ENCODE measurements at regions of chr20 and their contacts with region 1.

Region 1: GRCh38 chr20:4014031-4014474 is 1.3 kb downstream of the RNF24 start:
- DNase-seq: peak; percentile 64 to 67
- H3K4me3 ChIP-seq: peak overlapping the region; percentile 80
- H3K4me3 Mint-ChIP-seq: peak overlapping the region; percentile 65
- H3K27ac Mint-ChIP-seq: no peak overlapping the region
- H3K4me1 ChIP-seq: peaks cover 37% of the 10 kb centered on the region
- H3K4me1 Mint-ChIP-seq: peaks cover 38% of the 10 kb centered on the region
- H3K27me3 ChIP-seq: no peaks in the 10 kb centered on the region
- H3K27me3 Mint-ChIP-seq: no peaks in the 10 kb centered on the region
- CTCF ChIP-seq: peak; percentile 50 to 79

Region 2: DNA sequence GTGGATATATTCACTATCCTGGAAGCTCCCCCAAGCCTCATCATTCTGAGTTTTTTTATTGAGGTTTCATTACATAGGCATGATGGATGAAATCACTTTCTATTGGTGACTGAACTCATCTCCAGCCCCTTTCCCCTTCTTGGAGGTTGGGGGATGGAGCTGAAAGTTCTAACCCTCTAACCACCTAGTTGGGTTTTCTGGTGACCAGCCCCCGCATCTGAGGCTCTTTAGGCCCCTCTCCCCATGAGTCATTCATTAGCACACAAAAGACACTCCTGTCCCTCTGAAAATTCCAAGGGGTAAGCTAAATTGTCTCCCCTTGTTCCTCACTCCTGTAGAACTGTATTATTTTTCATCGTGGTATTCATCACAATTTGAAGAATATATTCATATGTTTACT is 384.2 kb before region 1 on chr20:
- CTCF ChIA-PET with region 1: no interaction called
- POLR2A ChIA-PET with region 1: no interaction called
- intact Hi-C with region 1: no loop called
- DNase-seq: no peak
- H3K4me3 ChIP-seq: no peak overlapping the region
- H3K4me3 Mint-ChIP-seq: no peak overlapping the region
- H3K27ac Mint-ChIP-seq: no peak overlapping the region
- H3K4me1 ChIP-seq: no peaks in the 10 kb centered on the region
- H3K4me1 Mint-ChIP-seq: peaks cover 7% of the 10 kb centered on the region
- H3K27me3 ChIP-seq: no peaks in the 10 kb centered on the region
- H3K27me3 Mint-ChIP-seq: no peaks in the 10 kb centered on the region
- CTCF ChIP-seq: no peak

Region 3: GRCh38 chr20:3901028-3901705 is 112.9 kb before region 1 on chr20:
- CTCF ChIA-PET with region 1: no interaction called
- POLR2A ChIA-PET with region 1: no interaction called
- intact Hi-C with region 1: no loop called
- DNase-seq: peak in 1 of 2 experiments; percentile 23
- H3K4me3 ChIP-seq: no peak overlapping the region
- H3K4me3 Mint-ChIP-seq: no peak overlapping the region
- H3K27ac Mint-ChIP-seq: peak overlapping the region; percentile 7
- H3K4me1 ChIP-seq: peaks cover 10% of the 10 kb centered on the region
- H3K4me1 Mint-ChIP-seq: peaks cover 29% of the 10 kb centered on the region
- H3K27me3 ChIP-seq: no peaks in the 10 kb centered on the region
- H3K27me3 Mint-ChIP-seq: no peaks in the 10 kb centered on the region
- CTCF ChIP-seq: no peak

Region 4: GRCh38 chr20:3995067-3995748 is 18.8 kb before region 1 on chr20:
- CTCF ChIA-PET with region 1: no interaction called
- POLR2A ChIA-PET with region 1: no interaction called
- intact Hi-C with region 1: no loop called
- DNase-seq: no peak
- H3K4me3 ChIP-seq: no peak overlapping the region
- H3K4me3 Mint-ChIP-seq: no peak overlapping the region
- H3K27ac Mint-ChIP-seq: no peak overlapping the region
- H3K4me1 ChIP-seq: no peaks in the 10 kb centered on the region
- H3K4me1 Mint-ChIP-seq: no peaks in the 10 kb centered on the region
- H3K27me3 ChIP-seq: no peaks in the 10 kb centered on the region
- H3K27me3 Mint-ChIP-seq: no peaks in the 10 kb centered on the region
- CTCF ChIP-seq: no peak

Region 5: GRCh38 chr20:4071178-4071693 is 57.2 kb after region 1 on chr20:
- CTCF ChIA-PET with region 1: interaction called, 14 read pairs
- POLR2A ChIA-PET with region 1: interaction called, 3 read pairs
- intact Hi-C with region 1: loop called (anchors 1 kb)
- DNase-seq: no peak
- H3K4me3 ChIP-seq: no peak overlapping the region
- H3K4me3 Mint-ChIP-seq: no peak overlapping the region
- H3K27ac Mint-ChIP-seq: no peak overlapping the region
- H3K4me1 ChIP-seq: no peaks in the 10 kb centered on the region
- H3K4me1 Mint-ChIP-seq: no peaks in the 10 kb centered on the region
- H3K27me3 ChIP-seq: no peaks in the 10 kb centered on the region
- H3K27me3 Mint-ChIP-seq: peaks cover 4% of the 10 kb centered on the region
- CTCF ChIP-seq: no peak

Region 6: GRCh38 chr20:4076671-4077070 is 62.6 kb after region 1 on chr20:
- CTCF ChIA-PET with region 1: interaction called, 14 read pairs
- POLR2A ChIA-PET with region 1: interaction called, 3 read pairs
- intact Hi-C with region 1: loop called (anchors 1 kb)
- DNase-seq: no peak
- H3K4me3 ChIP-seq: no peak overlapping the region
- H3K4me3 Mint-ChIP-seq: no peak overlapping the region
- H3K27ac Mint-ChIP-seq: no peak overlapping the region
- H3K4me1 ChIP-seq: no peaks in the 10 kb centered on the region
- H3K4me1 Mint-ChIP-seq: no peaks in the 10 kb centered on the region
- H3K27me3 ChIP-seq: no peaks in the 10 kb centered on the region; the same call in 1 of the 2 replicates
- H3K27me3 Mint-ChIP-seq: peaks cover 13% of the 10 kb centered on the region
- CTCF ChIP-seq: no peak

Region 7: DNA sequence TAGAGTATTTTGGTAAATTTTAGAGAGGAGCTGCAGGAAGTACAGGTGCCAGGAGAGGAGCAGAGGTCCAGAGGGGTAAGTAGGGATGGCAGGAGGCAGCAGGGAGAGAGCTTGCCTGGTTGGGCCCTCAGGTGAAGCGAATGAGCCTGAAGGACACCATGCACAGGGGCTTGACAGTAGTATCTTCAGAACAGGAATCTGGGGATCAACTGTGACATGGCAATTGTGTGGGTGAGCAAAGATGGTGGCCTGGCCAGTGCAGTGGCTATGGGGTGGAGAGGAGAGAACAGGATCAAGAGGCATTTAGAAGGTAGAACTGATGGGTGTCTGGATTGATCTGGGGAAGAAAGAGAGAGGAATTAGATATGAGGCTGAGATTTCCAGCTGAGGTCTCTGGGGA is 70.0 kb after region 1 on chr20:
- CTCF ChIA-PET with region 1: interaction called, 28 read pairs
- POLR2A ChIA-PET with region 1: no interaction called
- intact Hi-C with region 1: loop called (anchors 1 kb)
- DNase-seq: no peak
- H3K4me3 ChIP-seq: no peak overlapping the region
- H3K4me3 Mint-ChIP-seq: no peak overlapping the region
- H3K27ac Mint-ChIP-seq: no peak overlapping the region
- H3K4me1 ChIP-seq: peaks cover 5% of the 10 kb centered on the region
- H3K4me1 Mint-ChIP-seq: peaks cover 4% of the 10 kb centered on the region
- H3K27me3 ChIP-seq: no peaks in the 10 kb centered on the region
- H3K27me3 Mint-ChIP-seq: no peaks in the 10 kb centered on the region
- CTCF ChIP-seq: no peak

Measured in Caco-2 (cell line).